Activated naive CD4-positive, alpha-beta T cell treated with anti-CD3 and anti-CD28 coated beads for 36 hours (primary cell): ENCODE measurements at regions of chr12 and their contacts with region 1.

Region 1: GRCh38 chr12:27462151-27462694 is 15.7 kb downstream of the SMCO2 start:
- DNase-seq: peak; percentile 59
- H3K4me3 Mint-ChIP-seq: no peak overlapping the region
- H3K27ac Mint-ChIP-seq: peak overlapping the region; percentile 72
- H3K4me1 Mint-ChIP-seq: peaks cover 58% of the 10 kb centered on the region
- H3K27me3 Mint-ChIP-seq: no peaks in the 10 kb centered on the region

Region 2: GRCh38 chr12:27179400-27180214 is 282.6 kb before region 1 on chr12:
- CTCF ChIA-PET with region 1: no interaction called
- intact Hi-C with region 1: loop called (anchors 2 kb)
- DNase-seq: peak; percentile 69
- H3K4me3 Mint-ChIP-seq: no peak overlapping the region
- H3K27ac Mint-ChIP-seq: peak overlapping the region; percentile 76
- H3K4me1 Mint-ChIP-seq: peaks cover 38% of the 10 kb centered on the region
- H3K27me3 Mint-ChIP-seq: peaks cover 2% of the 10 kb centered on the region

Region 3: DNA sequence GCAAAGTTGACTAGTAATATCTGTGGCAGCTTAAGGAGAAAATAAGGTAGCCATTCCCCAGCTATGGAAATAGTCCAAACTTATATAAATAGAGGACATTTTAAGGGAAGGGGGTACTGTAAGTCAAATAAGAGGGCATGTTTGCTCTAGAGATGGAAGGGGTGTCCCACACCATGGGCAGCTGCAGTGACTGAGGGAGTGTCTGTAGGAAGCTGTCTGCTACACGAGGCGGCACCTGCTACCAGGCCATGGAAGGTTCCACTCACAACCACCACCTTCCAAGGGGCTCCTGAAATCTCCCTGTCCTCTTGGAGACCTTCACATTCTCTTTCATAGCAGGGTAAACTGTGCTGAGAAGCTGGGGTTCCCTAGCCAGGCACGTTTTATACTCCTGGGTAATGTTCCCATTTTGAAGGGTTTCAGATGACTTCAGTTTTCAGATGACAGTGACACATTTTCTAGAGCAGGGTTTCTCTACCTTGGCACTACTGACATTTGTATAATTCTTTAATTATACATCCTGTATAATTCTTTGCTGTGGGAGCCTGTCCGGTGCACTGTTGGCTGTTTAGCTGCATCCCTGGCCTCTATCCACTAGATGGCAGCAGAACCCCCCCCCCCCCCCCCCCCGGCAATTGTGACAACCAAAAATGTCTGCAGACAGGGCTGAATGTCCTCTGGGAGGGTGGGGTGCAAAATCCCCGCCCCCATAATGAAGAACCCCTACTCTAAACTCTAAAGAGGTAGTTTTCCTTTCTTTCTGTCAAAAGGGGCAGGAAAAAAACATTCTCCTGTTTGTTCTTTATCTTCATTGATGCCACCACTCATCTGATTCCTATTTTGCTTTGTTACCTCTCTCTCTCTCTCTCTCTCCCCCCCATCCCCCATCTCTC is 27.3 kb before region 1 on chr12:
- CTCF ChIA-PET with region 1: interaction called, 9 read pairs
- intact Hi-C with region 1: loop called (anchors 1 kb)
- DNase-seq: peak; percentile 37
- H3K4me3 Mint-ChIP-seq: no peak overlapping the region
- H3K27ac Mint-ChIP-seq: no peak overlapping the region
- H3K4me1 Mint-ChIP-seq: peaks cover 17% of the 10 kb centered on the region
- H3K27me3 Mint-ChIP-seq: peaks cover 2% of the 10 kb centered on the region

Region 4: DNA sequence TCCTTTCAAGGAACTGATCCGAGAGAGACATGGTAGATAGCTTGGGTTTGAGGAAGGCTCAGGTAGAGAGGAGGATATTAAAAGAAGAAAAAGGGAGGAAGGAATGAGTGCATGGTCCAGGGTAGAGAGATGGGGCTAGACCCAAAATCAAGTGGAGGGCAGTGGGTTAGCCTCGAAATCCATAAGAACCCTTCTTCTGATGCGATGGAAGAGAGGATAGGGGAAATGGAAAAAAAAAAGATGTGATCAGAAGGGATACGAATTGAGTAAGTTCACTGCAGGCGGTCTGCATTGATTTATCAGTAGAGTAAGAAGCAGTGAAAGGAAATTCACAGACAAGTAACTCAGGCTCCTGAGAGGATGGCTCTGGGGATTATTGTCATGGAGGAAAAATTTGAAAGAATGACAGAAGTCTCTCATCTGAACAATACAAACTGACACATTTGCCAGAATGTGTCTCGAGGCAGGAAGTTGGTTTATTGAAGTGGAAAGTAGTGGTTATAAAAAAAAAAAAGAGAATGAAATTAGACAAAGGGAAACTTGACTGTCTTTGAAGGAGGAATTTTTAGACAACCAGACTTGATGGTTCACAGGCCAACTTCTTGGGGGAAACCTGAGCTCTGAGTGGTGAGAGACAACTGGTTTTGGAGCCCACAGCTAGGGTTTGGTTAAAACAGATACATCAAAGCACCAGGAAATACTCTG is 72.0 kb after region 1 on chr12:
- CTCF ChIA-PET with region 1: no interaction called
- intact Hi-C with region 1: loop called (anchors 1 kb)
- DNase-seq: peak; percentile 71
- H3K4me3 Mint-ChIP-seq: peak overlapping the region; percentile 7
- H3K27ac Mint-ChIP-seq: peak overlapping the region; percentile 71
- H3K4me1 Mint-ChIP-seq: peaks cover 50% of the 10 kb centered on the region
- H3K27me3 Mint-ChIP-seq: no peaks in the 10 kb centered on the region

Region 5: DNA sequence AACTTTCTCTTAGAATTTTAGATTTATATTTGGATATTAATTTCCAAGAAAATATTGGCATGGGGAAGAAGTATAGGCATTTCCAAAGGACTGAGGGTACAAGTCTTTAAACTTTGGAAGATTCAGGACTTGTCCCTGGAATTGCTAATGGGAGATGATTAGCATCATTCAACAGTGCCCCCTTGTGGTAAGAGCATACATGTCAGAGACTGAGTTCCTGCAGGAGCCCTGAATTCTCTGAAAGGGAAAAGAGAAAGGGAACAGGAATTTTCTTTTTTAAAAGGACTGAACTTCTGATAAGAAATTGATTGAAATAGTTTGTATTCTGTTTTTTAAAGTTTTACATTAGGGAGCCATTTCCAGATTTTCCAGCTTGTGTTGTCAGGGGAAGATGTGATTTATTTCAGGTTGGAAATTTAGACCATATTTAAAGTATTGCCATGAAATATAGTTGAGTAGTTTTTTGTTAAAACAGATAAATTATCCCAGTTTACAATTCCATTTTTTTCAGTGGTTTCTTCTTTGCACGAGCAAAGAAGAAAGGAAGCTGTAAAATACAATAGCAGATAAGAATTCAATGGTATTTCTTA is 190.0 kb after region 1 on chr12:
- CTCF ChIA-PET with region 1: no interaction called
- intact Hi-C with region 1: loop called (anchors 1 kb)
- DNase-seq: peak; percentile 44
- H3K4me3 Mint-ChIP-seq: no peak overlapping the region
- H3K27ac Mint-ChIP-seq: no peak overlapping the region
- H3K4me1 Mint-ChIP-seq: peaks cover 4% of the 10 kb centered on the region
- H3K27me3 Mint-ChIP-seq: no peaks in the 10 kb centered on the region

Region 6: GRCh38 chr12:28253161-28253641 is 791.0 kb after region 1 on chr12:
- CTCF ChIA-PET with region 1: no interaction called
- intact Hi-C with region 1: loop called (anchors 5 kb)
- DNase-seq: peak; percentile 60
- H3K4me3 Mint-ChIP-seq: peak overlapping the region; percentile 30
- H3K27ac Mint-ChIP-seq: peak overlapping the region; percentile 79
- H3K4me1 Mint-ChIP-seq: peaks cover 63% of the 10 kb centered on the region
- H3K27me3 Mint-ChIP-seq: no peaks in the 10 kb centered on the region